ENCODE measurements at regions of chr3 and their contacts with region 1.

Region 1: DNA sequence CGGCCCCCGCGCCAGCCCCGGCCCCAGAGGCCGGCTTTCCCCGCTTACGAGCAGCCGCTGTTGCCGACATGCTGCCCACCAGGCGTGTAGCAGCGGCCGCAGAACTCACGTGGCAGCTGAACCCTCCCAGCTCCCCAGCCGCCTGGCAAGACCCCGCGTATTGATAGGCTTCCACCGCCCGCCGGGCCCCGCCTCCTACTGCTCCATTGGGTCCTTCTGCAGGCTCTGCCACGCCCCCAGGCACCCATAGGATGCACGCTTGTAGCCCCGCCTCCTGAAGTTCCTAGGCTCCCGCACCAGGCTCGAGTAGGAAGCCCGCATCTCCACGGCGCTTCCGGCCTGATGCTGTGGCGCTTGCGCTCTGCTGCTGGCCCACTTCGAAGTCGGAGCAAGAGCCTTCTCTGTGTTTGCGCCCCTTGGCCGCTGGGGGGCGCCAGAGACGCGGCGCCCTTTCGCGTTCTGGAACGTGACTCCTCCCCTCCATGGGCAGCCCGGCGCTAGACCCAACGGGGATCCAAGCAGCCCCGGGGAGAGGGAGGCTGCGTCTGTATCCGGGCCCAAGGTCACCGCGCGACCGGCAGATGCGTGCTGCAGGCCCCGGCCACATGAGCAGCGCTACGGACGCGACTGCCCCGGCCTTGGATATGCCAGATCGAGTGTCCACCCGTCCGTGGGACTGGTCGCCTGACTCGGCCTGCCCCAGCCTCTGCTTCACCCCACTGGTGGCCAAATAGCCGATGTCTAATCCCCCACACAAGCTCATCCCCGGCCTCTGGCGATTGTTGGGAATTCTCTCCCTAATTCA is at the starts of genes PARP3 and RRP9:
- DNase-seq: peak; percentile 100
- H3K4me3 ChIP-seq: peak within 1 kb of the TSS; percentile 71 to 95 (median 82)
- H3K27ac ChIP-seq: peak within 1 kb of the TSS; percentile 82 to 94 (median 90)
- H3K4me1 ChIP-seq: peaks cover 15 to 44% (median 32%) of the 10 kb centered on the region in 6 donors
- H3K27me3 ChIP-seq: no peaks in the 10 kb centered on the region
- CTCF ChIP-seq: peak; percentile 100
- POLR2A ChIP-seq: no peak
- total RNA-seq, gene PARP3: 23.1 to 34.2 (median 28.2) TPM
- total RNA-seq, gene RRP9: 9.5 to 20.6 (median 12.5) TPM

Region 2: DNA sequence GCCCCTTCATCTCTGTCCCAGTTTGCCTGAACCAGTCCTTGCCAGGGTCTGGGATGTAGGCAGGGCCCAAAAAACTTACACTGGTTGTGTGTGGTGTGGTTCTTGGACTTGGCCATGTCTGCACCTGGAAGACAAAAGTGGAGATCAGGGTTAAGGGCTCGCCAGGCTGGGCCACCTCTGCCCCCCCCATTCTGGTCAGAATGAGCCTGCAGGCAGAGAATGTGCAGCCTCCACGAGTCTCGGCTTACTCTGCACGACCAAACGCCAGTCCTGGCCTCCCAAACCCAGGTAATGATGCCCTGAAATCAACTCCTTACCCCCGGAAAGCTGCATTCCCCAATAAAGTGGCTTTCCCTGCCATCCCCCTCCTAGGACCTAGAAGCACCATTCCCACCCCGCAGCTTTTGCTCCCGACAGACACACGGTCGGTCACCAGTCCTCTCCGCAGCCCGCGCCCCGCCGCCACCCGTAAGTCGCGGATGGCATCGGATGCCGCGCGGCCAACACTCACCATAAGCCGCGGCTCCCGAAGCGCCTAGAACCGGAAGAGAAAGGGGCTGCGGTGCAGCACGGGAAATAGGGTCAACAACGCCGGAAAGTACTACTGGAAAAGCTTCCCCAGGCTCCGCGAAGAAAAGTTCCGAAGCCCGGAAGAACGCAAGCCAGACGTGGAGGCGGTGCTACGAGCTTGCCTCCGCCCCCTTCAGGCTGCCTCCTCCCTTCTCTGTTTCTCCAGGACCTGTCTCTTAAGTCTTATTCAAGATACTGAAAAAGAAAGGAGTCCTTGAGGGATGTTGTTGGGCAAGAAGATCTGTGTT is 53.6 kb after region 1 on chr3 and contains the start of gene RPL29:
- intact Hi-C with region 1: loop called (anchors 10 kb)
- DNase-seq: peak; percentile 94
- H3K4me3 ChIP-seq: peak within 1 kb of the TSS; percentile 55 to 84 (median 68)
- H3K27ac ChIP-seq: peak within 1 kb of the TSS; percentile 79 to 93 (median 88)
- H3K4me1 ChIP-seq: peaks cover 16 to 51% (median 33%) of the 10 kb centered on the region in 6 donors
- H3K27me3 ChIP-seq: no peaks in the 10 kb centered on the region
- CTCF ChIP-seq: peak in 10 of 11 experiments; percentile 13 to 62 (median 49)
- POLR2A ChIP-seq: peak; percentile 24 to 58 (median 32)
- total RNA-seq, gene RPL29: 684 to 1,403 (median 1,036) TPM

Region 3: DNA sequence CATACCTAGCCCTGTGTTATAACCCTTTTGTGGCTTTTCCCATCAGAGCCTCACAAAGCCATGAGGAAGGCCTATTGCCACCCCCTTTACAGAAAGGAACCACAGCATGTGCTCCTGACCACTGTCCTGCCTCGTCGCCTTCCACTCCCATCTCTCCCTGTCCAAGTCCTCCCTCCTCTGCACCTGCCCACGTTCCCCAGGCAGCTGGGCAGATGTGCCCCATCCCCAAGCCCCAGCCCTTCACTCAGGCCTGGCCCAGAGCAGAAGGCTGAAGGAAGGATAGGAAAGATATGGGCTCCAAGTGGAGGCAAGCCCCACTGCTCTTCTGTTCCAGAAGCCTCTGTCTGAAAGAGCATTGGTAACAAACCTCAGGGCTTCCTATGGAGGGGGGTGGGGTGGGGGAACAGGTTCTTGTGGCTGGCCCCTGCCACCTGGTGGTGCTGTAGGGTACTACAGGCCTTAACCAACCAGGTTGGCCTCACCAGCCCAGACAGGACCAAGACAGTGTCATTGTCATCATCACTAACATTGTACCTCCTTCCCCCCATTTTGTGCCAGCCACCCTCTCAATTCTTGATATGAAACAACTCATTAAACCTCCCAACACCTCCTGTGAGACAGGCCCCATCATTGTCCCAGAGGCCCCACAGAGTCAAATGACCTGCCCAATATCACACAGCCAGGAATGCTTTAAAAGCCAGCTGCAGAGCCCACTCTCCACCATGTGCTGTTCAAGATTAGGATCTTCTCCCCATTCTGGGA is 202.2 kb after region 1 on chr3:
- intact Hi-C with region 1: loop called (anchors 5 kb)
- DNase-seq: peak; percentile 94
- H3K4me3 ChIP-seq: no peak overlapping the region
- H3K27ac ChIP-seq: peak overlapping the region in 1 of 8 donors; percentile 26
- H3K4me1 ChIP-seq: peaks cover 0 to 11% (median 8%) of the 10 kb centered on the region in 6 donors
- H3K27me3 ChIP-seq: no peaks in the 10 kb centered on the region
- CTCF ChIP-seq: peak; percentile 93 to 98 (median 98)
- POLR2A ChIP-seq: no peak

Region 4: GRCh38 chr3:52400275-52400793 is 458.3 kb after region 1 on chr3:
- intact Hi-C with region 1: no loop called
- DNase-seq: peak; percentile 64
- H3K4me3 ChIP-seq: no peak overlapping the region
- H3K27ac ChIP-seq: no peak overlapping the region
- H3K4me1 ChIP-seq: peaks cover 0 to 11% (median 0%) of the 10 kb centered on the region in 6 donors
- H3K27me3 ChIP-seq: no peaks in the 10 kb centered on the region
- CTCF ChIP-seq: no peak
- POLR2A ChIP-seq: no peak

Region 5: GRCh38 chr3:52978109-52978754 is 1036.2 kb after region 1 on chr3:
- intact Hi-C with region 1: no loop called
- DNase-seq: no peak
- H3K4me3 ChIP-seq: no peak overlapping the region
- H3K27ac ChIP-seq: no peak overlapping the region
- H3K4me1 ChIP-seq: peaks cover 4 to 11% (median 5%) of the 10 kb centered on the region in 6 donors
- H3K27me3 ChIP-seq: no peaks in the 10 kb centered on the region
- CTCF ChIP-seq: no peak
- POLR2A ChIP-seq: no peak

Region 6: GRCh38 chr3:53236112-53236841 is 1294.3 kb after region 1 on chr3:
- intact Hi-C with region 1: no loop called
- DNase-seq: peak; percentile 93
- H3K4me3 ChIP-seq: no peak overlapping the region
- H3K27ac ChIP-seq: peak overlapping the region; percentile 41 to 86 (median 76)
- H3K4me1 ChIP-seq: peaks cover 11 to 81% (median 49%) of the 10 kb centered on the region in 6 donors
- H3K27me3 ChIP-seq: no peaks in the 10 kb centered on the region
- CTCF ChIP-seq: no peak
- POLR2A ChIP-seq: no peak